Activated naive CD4-positive, alpha-beta T cell treated with anti-CD3 and anti-CD28 coated beads for 36 hours (primary cell): ENCODE measurements at regions of chr14 and their contacts with region 1.

Region 1: GRCh38 chr14:35826218-35826951 is at the start of gene BRMS1L:
- DNase-seq: peak; percentile 99
- H3K4me3 Mint-ChIP-seq: peak within 1 kb of the TSS; percentile 84
- H3K27ac Mint-ChIP-seq: peak within 1 kb of the TSS; percentile 92
- H3K4me1 Mint-ChIP-seq: peaks cover 29% of the 10 kb centered on the region
- H3K27me3 Mint-ChIP-seq: no peaks in the 10 kb centered on the region
- total RNA-seq, gene BRMS1L: 4.4 to 5.3 TPM

Region 2: DNA sequence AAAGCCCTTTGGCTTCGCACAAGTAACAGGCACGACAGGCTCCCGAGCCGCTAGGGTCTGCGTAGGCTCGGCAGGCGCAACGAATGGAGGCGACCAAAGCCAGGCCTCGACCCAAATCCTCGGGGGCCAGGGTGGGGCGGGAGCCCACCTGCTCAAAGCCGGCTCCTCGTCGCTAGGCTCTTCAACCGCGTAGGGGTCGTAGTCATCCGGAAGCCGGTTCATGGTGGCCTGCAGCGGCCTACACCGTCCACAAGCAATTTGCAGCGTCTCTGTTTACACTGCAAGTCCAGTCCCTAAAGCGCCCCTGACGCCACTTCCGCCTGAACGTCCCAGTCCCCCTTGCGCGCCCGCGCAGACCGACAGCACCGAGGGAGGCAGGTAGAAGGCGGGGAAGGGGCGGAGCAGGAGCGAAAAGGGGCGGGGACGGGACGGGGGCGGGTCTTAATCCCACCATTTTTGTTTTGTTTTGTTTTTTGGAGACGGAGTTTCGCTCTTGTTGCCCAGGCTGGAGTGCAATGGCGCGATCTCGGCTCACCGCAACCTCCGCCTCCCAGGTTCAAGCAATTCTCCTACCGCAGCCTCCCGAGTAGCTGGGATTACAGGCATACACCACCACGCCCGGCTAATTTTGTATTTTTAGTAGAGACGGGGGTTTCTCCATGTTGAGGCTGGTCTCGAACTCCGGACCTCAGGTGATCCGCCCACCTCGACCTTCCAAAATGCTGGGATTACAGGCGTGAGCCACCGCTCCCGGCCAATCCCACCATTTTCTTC is 1286.8 kb before region 1 on chr14 and contains the start of gene EAPP:
- CTCF ChIA-PET with region 1: no interaction called
- intact Hi-C with region 1: loop called (anchors 5 kb)
- DNase-seq: peak; percentile 98
- H3K4me3 Mint-ChIP-seq: peak within 1 kb of the TSS; percentile 95
- H3K27ac Mint-ChIP-seq: peak within 1 kb of the TSS; percentile 98
- H3K4me1 Mint-ChIP-seq: peaks cover 32% of the 10 kb centered on the region
- H3K27me3 Mint-ChIP-seq: no peaks in the 10 kb centered on the region
- total RNA-seq, gene EAPP: 34.0 to 35.4 TPM

Region 3: GRCh38 chr14:35046048-35046741 is 780.2 kb before region 1 on chr14 and contains the start of gene FAM177A1:
- CTCF ChIA-PET with region 1: no interaction called
- intact Hi-C with region 1: loop called (anchors 5 kb)
- DNase-seq: peak; percentile 99
- H3K4me3 Mint-ChIP-seq: peak within 1 kb of the TSS; percentile 89
- H3K27ac Mint-ChIP-seq: peak within 1 kb of the TSS; percentile 98
- H3K4me1 Mint-ChIP-seq: peaks cover 25% of the 10 kb centered on the region
- H3K27me3 Mint-ChIP-seq: no peaks in the 10 kb centered on the region
- total RNA-seq, gene FAM177A1: 55.0 to 58.5 TPM

Region 4: DNA sequence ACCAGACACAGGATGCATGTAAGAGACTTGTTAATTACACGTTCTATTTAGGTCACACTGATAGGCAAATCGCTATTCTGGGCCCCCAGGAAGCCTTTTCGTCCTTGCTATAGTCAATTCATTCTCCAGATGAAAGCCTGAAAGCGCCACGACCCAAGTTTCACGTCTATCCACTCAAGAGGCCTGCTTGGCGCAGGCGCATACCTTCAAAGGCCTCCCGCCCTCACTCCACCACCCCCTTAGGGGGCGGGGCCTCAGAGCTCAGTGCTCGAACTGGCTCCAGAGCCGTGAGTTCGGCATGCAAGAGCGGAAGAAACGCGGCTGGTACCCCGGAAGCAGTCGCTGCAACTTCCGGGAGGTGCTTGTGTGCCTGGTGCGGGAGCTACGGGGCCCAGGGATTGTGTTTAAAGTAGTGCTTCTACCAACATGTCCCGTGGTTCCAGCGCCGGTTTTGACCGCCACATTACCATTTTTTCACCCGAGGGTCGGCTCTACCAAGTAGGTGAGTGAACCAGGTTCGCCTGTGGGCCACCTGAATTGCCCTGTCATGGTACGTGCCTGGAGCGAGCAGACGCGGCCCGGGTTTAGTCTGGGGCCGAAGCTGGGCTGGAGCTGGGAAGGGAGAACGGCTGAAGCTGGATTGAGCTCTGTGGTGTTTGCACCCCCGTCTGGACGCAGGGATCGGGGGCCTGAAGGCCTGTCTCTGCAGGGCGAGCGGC is 534.2 kb before region 1 on chr14 and contains the start of gene PSMA6:
- CTCF ChIA-PET with region 1: no interaction called
- intact Hi-C with region 1: loop called (anchors 2 kb)
- DNase-seq: peak; percentile 99
- H3K4me3 Mint-ChIP-seq: peak within 1 kb of the TSS; percentile 98
- H3K27ac Mint-ChIP-seq: peak within 1 kb of the TSS; percentile 97
- H3K4me1 Mint-ChIP-seq: peaks cover 53% of the 10 kb centered on the region
- H3K27me3 Mint-ChIP-seq: no peaks in the 10 kb centered on the region
- total RNA-seq, gene PSMA6: 433 to 437 TPM

Region 5: DNA sequence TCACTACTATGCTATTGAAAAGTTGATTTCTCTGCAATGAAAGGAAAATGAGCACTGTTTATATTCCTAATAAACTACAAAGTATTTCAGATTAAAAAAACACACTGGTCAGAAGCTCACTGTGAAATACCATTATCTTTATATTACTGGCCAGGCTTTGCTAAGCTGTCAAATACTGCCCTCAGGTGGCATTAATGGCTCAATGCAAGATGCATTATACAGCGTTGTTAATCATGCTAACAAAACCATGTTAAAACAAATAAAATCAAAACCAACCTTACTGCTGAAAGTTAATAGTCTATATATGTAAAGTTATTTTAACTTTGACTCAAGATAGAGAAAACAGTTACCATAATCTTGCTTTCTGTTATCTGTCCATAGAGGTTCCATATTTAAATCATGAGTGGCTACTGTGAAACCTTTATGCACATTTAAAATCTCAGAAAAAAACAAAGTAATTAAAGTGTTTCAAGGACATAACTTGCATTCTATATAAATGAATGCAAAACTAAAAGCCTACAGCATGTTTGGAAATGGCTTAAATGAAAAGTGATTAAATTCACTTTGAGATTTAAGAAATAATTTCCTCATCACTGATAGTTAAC is 138.9 kb before region 1 on chr14:
- CTCF ChIA-PET with region 1: no interaction called
- intact Hi-C with region 1: loop called (anchors 5 kb)
- DNase-seq: peak; percentile 63
- H3K4me3 Mint-ChIP-seq: no peak overlapping the region
- H3K27ac Mint-ChIP-seq: no peak overlapping the region
- H3K4me1 Mint-ChIP-seq: peaks cover 16% of the 10 kb centered on the region
- H3K27me3 Mint-ChIP-seq: no peaks in the 10 kb centered on the region

Region 6: GRCh38 chr14:35814371-35815005 is 11.9 kb before region 1 on chr14:
- CTCF ChIA-PET with region 1: interaction called, 22 read pairs
- intact Hi-C with region 1: loop called (anchors 1 kb)
- DNase-seq: peak; percentile 91
- H3K4me3 Mint-ChIP-seq: no peak overlapping the region
- H3K27ac Mint-ChIP-seq: no peak overlapping the region
- H3K4me1 Mint-ChIP-seq: peaks cover 6% of the 10 kb centered on the region
- H3K27me3 Mint-ChIP-seq: no peaks in the 10 kb centered on the region

Region 7: GRCh38 chr14:36320200-36320896 is 494.0 kb after region 1 on chr14 and contains the start of gene MBIP:
- CTCF ChIA-PET with region 1: no interaction called
- intact Hi-C with region 1: loop called (anchors 1 kb)
- DNase-seq: peak; percentile 98
- H3K4me3 Mint-ChIP-seq: peak within 1 kb of the TSS; percentile 97
- H3K27ac Mint-ChIP-seq: peak within 1 kb of the TSS; percentile 96
- H3K4me1 Mint-ChIP-seq: peaks cover 27% of the 10 kb centered on the region
- H3K27me3 Mint-ChIP-seq: peaks cover 5% of the 10 kb centered on the region
- total RNA-seq, gene MBIP: 29.9 to 30.8 TPM

Region 8: DNA sequence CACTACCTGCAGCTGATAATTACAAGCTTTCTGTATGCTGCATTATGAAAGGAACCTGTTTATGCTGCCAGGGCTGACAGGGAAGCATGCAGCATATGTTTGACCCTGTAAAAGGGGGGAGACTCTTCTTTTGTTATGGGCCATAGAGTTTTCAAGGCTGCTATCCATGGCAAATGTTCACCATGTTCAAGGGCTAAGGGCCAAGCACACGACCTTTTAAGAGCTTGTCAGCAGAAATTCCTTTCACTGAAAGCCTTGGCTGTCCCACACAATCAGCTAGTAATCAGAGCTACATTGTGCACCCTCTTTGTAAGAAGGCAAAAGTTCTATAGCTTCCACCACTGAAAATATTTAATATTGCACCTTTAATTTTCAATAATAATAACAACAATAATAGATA is 568.2 kb after region 1 on chr14:
- CTCF ChIA-PET with region 1: no interaction called
- intact Hi-C with region 1: no loop called
- DNase-seq: no peak
- H3K4me3 Mint-ChIP-seq: no peak overlapping the region
- H3K27ac Mint-ChIP-seq: no peak overlapping the region
- H3K4me1 Mint-ChIP-seq: no peaks in the 10 kb centered on the region
- H3K27me3 Mint-ChIP-seq: peaks cover 23% of the 10 kb centered on the region